Spleen (tissue), 13 donors: ENCODE measurements at regions of chr21 and their contacts with region 1.

Region 1: DNA sequence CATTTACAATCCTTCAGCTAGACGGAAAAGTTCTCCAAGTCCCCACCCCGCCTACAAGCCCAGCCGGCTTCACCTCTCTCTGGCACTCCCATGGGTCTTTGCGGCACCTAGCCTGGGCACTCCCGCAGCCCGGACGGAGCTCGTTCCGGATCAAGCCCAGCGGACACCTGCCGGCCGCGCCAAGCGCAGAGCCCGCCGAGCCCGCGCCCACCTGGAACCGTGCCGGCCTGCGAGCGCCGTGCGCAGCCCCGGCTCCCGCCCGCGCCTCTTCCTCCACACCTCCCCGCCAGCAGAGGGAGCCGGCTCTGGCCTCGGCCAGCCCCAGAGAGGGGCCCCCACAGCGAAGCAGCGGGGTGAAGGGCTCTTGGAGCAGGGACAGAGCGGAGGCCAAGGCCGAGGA is 50.0 kb upstream of the KRTAP19-8 start:
- DNase-seq: no peak
- H3K4me3 ChIP-seq: no peak overlapping the region
- H3K27ac ChIP-seq: no peak overlapping the region
- H3K4me1 ChIP-seq: peaks cover 0 to 6% (median 0%) of the 10 kb centered on the region in 6 donors
- H3K27me3 ChIP-seq: peaks cover 0 to 10% (median 0%) of the 10 kb centered on the region in 7 donors
- CTCF ChIP-seq: no peak
- POLR2A ChIP-seq: no peak

Region 2: GRCh38 chr21:30340441-30341241 is 747.7 kb before region 1 on chr21:
- intact Hi-C with region 1: loop called (anchors 5 kb)
- DNase-seq: no peak
- H3K4me3 ChIP-seq: no peak overlapping the region
- H3K27ac ChIP-seq: no peak overlapping the region
- H3K4me1 ChIP-seq: no peaks in the 10 kb centered on the region
- H3K27me3 ChIP-seq: no peaks in the 10 kb centered on the region
- CTCF ChIP-seq: peak; percentile 34 to 78 (median 62)
- POLR2A ChIP-seq: no peak

Region 3: DNA sequence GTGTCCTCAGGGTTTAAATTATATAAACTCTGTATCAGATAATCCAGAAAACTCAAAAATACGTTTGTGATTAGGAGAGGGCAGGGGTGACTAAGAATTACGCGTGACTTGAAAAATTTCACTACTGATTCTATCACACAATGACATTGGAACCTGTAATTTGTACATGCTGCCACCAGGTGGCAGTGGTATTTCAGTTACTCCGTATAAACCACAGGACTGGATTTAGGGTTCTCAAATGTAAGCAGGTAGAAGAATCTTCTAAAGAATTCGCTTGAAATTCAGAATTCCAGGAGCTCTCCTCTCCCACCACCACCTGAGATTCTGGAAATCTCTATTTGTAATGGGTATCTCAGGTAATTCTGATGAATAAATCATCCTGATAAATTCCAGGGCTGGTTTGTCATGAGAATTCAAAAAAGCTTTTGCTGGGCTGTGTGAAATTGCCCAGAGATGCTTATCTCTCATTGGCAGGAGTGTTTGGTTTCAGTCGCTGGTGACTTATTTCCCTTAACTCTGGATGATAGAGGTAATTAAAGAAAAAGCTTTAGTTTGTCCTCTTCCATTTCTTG is 257.0 kb before region 1 on chr21:
- intact Hi-C with region 1: loop called (anchors 10 kb)
- DNase-seq: no peak
- H3K4me3 ChIP-seq: no peak overlapping the region
- H3K27ac ChIP-seq: no peak overlapping the region
- H3K4me1 ChIP-seq: no peaks in the 10 kb centered on the region
- H3K27me3 ChIP-seq: no peaks in the 10 kb centered on the region
- CTCF ChIP-seq: peak in 9 of 11 experiments; percentile 18 to 55 (median 41)
- POLR2A ChIP-seq: no peak

Region 4: GRCh38 chr21:30917557-30917956 is 170.8 kb before region 1 on chr21:
- intact Hi-C with region 1: no loop called
- DNase-seq: no peak
- H3K4me3 ChIP-seq: no peak overlapping the region
- H3K27ac ChIP-seq: no peak overlapping the region
- H3K4me1 ChIP-seq: no peaks in the 10 kb centered on the region
- H3K27me3 ChIP-seq: no peaks in the 10 kb centered on the region
- CTCF ChIP-seq: no peak
- POLR2A ChIP-seq: no peak

Region 5: DNA sequence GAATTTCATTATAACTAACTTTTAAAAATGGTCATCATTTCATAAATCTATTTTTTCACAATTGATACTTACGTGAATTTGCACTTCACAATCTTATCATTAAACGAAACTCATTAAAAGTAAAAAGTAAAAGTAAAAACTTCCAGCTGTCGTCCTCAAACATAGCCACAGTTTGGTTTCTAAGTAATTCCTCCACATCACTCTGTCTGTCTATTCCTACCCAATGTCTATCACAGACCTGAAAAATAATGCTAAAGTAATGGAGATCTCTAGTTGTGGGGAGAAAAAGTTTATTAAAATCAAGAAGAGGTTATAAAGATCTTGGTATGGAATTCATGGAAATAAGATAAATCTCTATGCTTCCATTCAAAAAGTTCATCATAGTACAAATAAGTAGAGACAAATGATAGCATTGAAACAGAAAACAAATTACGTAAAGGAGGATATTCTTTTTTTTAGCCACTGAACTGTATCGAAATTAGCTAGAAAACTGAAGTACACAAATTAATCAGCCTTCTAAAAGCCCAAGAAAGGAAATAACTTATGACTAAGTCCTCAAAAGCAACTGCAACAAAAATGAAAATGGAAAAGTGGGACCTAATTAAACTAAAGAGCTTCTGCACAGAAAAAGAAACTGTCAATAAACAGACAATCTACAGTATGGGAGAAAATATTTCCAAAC is 107.2 kb after region 1 on chr21:
- intact Hi-C with region 1: no loop called
- DNase-seq: no peak
- H3K4me3 ChIP-seq: no peak overlapping the region
- H3K27ac ChIP-seq: no peak overlapping the region
- H3K4me1 ChIP-seq: peaks cover 0 to 8% (median under 1%) of the 10 kb centered on the region in 6 donors
- H3K27me3 ChIP-seq: peaks cover 0 to 4% (median 0%) of the 10 kb centered on the region in 7 donors
- CTCF ChIP-seq: no peak
- POLR2A ChIP-seq: no peak